Ascending aorta (tissue), 2 donors: ENCODE measurements at regions of chr9 and their contacts with region 1.

Region 1: DNA sequence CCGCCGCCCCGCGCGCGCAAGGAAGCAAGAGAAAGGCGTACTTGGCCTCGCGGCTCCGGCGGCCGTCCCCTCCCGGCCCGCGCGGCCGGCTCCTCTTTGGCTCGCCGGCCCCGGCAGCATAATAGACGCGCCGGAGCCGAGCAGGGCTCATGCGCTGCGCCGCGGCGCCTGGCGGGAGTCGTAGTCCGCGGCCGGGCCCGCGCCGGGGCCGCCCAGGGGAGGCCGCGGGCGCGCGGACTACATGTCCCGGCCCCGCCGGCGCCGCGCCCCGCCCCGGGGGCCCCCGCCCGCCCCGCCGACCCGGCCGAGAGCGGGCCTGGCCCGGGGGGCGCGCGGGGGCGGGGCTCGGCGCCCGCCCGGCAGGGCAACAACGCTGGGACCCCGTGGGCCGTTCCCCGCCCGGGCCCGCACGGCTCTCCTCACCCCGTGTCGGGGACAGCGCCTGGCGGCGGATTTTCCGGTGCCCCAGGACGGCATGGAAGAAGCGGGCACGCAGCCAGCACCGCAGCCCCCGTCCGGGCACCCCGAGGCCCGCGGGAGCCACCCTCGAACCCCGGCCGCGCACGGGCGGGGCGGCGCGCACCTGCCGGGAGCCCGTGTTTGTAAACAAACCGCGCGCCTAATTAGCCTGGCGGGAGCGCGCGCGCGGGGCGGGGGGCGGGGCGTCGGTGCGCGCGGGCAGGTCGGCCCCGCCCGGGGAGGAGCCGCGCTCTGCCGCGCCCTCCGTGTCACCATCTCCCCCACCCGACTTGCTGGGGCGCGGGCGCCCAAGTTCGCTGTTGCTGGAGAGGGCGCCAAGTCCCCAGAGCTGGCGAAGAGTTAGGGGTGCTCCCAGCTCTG is at the start of gene BRD3:
- DNase-seq: peak in 1 of 2 donors; percentile 91
- H3K4me3 ChIP-seq: peak within 1 kb of the TSS; percentile 98
- H3K27ac ChIP-seq: peak within 1 kb of the TSS; percentile 89 to 99
- H3K4me1 ChIP-seq: peaks cover 3 to 16% of the 10 kb centered on the region in 2 donors
- H3K27me3 ChIP-seq: no peaks in the 10 kb centered on the region
- CTCF ChIP-seq: no peak
- total RNA-seq, gene BRD3: 32.0 TPM

Region 2: GRCh38 chr9:134135343-134136118 is 67.4 kb after region 1 on chr9 and contains the start of gene WDR5:
- intact Hi-C with region 1: loop called (anchors 1 kb)
- DNase-seq: peak; percentile 57 to 93
- H3K4me3 ChIP-seq: peak within 1 kb of the TSS; percentile 90 to 96
- H3K27ac ChIP-seq: peak within 1 kb of the TSS; percentile 76 to 82
- H3K4me1 ChIP-seq: peaks cover 11 to 39% of the 10 kb centered on the region in 2 donors
- H3K27me3 ChIP-seq: no peaks in the 10 kb centered on the region
- CTCF ChIP-seq: peak in 1 of 3 experiments; percentile 12
- total RNA-seq, gene WDR5: 13.9 TPM

Region 3: DNA sequence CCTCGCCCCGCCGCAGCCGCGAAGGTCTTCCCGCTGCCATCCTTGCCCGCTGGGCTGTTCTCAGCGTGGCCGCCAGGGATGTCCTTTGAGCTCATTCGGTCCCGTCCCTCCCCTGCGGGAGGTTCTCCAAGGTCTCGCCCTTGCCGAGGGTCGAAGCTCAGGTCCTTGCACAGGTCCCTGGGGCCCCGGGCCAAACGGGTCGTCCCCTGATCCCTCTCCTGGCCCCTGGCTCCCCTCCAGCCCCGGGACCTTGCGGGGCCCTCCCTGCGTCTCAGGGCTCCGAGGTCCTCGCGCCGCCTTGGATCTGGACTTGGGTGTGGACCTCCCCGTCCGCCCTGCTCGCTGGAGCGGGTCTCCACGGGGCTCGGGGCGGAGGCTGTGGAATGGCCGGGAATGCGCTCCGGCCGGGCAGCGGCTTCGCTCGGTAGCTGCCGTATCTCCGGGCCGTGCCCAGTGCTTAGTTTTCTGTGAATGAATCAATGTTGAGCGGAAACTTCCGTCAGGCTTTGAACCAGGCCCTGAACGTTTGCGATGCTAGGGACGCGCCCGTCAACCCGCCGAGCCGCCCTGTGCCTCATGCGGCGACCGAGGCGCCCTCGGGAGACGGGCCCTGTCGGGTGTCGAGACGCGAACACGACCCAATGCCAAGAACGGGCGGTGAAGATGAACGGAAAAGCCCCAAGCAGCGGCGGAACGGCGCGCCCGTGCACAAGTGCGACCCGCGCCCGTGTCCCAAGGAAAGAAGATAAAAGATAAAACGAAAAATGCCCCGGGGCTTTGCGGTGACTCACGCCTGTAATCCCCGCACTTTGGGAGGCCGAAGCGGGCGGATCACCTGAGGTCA is 95.5 kb after region 1 on chr9:
- intact Hi-C with region 1: loop called (anchors 2 kb)
- DNase-seq: peak in 1 of 2 donors; percentile 84
- H3K4me3 ChIP-seq: no peak overlapping the region
- H3K27ac ChIP-seq: no peak overlapping the region
- H3K4me1 ChIP-seq: peaks cover 8 to 16% of the 10 kb centered on the region in 2 donors
- H3K27me3 ChIP-seq: no peaks in the 10 kb centered on the region
- CTCF ChIP-seq: peak; percentile 43 to 57 (median 48)